Activated CD8-positive, alpha-beta T cell treated with anti-CD3 and anti-CD28 coated beads for 36 hours (primary cell): ENCODE measurements at regions of chr11 and their contacts with region 1.

Region 1: DNA sequence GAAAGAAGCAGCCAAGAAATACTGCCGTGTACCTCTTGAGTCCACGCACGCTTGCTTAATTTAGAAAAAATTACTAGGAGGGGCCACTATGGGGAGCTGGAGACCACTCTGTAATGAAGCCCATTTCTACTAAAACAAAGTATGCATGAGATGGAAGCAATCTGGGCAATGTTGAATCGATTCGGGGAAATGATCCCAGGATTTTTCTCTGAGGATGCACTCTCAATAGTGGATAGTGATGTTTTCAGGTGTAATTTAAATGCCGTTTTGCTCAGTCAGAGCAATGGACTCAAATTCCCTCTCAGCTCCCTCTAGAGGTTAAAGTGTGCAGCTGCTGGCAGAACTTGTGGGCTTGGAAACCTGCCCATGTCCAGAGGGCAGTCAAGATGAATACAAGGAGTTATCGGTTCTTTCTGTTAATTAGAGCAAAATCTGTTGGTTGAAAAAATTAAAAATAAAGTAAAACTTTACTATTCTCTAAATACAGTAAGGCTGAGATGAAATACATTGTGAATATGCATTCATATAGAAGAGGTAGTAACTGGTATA is 64.1 kb downstream of the ME3 start:
- DNase-seq: peak; percentile 54
- ATAC-seq: peak; percentile 88
- H3K4me3 Mint-ChIP-seq: no peak overlapping the region
- H3K27ac Mint-ChIP-seq: no peak overlapping the region
- H3K4me1 Mint-ChIP-seq: peaks cover 4% of the 10 kb centered on the region
- H3K27me3 Mint-ChIP-seq: peaks cover 4% of the 10 kb centered on the region
- CTCF ChIP-seq: peak; percentile 96

Region 2: DNA sequence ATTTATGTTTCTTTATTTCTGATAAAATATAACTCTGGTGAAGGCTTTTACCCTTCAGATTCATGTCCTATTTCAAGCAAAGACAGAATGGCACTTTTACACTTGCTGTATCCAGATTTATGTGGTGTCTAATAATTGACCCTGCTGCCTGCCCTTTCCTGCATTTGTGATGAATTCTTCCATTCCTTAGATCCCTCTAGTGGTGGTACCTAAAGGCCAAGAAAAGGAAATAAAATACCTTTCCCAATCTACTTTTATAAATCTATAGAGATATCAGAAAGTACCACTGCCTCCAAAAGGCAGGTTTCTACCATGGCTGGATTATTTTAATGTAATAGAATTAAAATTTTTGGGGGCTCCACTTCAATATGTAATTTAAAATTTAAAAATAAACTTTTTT is 199.5 kb before region 1 on chr11:
- CTCF ChIA-PET with region 1: no interaction called
- POLR2A ChIA-PET with region 1: no interaction called
- intact Hi-C with region 1: no loop called
- DNase-seq: no peak
- ATAC-seq: no peak
- H3K4me3 Mint-ChIP-seq: no peak overlapping the region
- H3K27ac Mint-ChIP-seq: no peak overlapping the region
- H3K4me1 Mint-ChIP-seq: no peaks in the 10 kb centered on the region
- H3K27me3 Mint-ChIP-seq: no peaks in the 10 kb centered on the region
- CTCF ChIP-seq: no peak

Region 3: DNA sequence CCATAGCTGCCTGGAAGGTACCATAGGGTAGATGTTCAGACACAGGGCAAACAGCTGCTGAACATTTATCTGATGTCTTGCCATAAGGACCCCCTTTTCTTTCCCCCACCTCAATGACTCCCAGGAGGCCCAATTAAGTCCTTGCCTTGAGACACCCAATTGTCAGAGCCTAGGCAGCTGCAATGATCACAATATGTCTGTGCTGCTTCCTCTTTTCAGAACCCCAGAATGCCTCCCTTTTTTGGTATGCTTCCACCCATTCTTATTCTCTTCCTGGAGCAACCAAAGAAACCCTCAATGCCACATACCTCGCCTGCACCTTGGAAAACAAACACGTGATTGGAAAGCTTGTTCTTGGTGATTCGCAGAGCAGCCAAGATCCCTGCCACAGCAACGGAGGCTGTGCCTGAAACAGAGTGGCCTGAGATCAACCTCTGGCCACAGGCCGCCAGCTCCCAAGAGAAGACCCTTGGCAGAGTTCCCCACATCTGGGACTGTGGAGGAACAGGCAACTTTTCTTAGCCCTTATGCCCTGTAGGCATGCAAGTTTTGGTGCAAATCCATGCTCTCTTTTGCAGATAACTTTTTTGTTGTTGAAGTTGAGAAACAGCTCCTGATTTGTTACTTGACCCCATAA is 158.2 kb before region 1 on chr11:
- CTCF ChIA-PET with region 1: interaction called, 28 read pairs
- POLR2A ChIA-PET with region 1: no interaction called
- intact Hi-C with region 1: loop called (anchors 5 kb)
- DNase-seq: no peak
- ATAC-seq: no peak
- H3K4me3 Mint-ChIP-seq: no peak overlapping the region
- H3K27ac Mint-ChIP-seq: no peak overlapping the region
- H3K4me1 Mint-ChIP-seq: peaks cover 23% of the 10 kb centered on the region
- H3K27me3 Mint-ChIP-seq: no peaks in the 10 kb centered on the region
- CTCF ChIP-seq: no peak

Region 4: GRCh38 chr11:86477495-86478155 is 130.7 kb before region 1 on chr11:
- CTCF ChIA-PET with region 1: no interaction called
- POLR2A ChIA-PET with region 1: no interaction called
- intact Hi-C with region 1: no loop called
- DNase-seq: no peak
- ATAC-seq: no peak
- H3K4me3 Mint-ChIP-seq: no peak overlapping the region
- H3K27ac Mint-ChIP-seq: no peak overlapping the region
- H3K4me1 Mint-ChIP-seq: no peaks in the 10 kb centered on the region
- H3K27me3 Mint-ChIP-seq: no peaks in the 10 kb centered on the region
- CTCF ChIP-seq: no peak

Region 5: DNA sequence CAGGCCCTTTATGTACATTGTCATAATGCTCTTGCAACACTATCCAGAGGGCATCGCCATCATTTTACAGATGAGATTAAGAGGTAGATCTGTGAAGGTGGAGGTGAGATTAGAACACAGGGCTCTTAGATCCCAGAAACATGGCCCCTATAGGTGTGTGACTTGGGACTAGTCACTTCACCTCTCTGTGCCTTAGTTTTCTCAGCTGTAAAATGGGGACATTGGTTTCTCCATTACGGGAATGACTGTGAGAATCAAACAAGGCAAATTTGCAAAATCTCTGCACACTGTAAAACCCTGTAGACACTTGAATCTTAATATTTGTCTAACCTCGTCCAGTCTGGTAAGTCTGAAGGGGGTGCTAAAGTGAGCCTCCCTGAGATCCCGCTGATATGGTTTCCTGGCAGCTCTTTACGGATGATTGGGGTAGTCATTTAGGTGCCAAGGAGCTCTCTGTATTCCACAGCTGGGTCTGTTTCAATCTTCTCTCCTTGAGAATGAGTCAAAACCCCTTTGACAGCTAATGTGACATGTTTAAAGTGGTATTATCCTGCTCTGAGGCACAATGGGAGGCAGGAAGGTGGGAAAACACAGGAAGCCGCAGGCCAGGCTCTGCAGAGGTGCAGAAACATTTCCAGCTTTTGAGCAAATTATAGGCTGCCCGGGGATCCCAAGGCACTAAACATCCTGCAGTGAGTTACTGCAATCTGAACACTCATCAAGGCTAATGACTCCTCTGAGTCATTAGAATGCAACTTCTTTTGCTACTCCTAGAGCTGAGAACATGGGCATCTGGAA is 92.8 kb before region 1 on chr11:
- CTCF ChIA-PET with region 1: interaction called, 11 read pairs
- POLR2A ChIA-PET with region 1: no interaction called
- intact Hi-C with region 1: no loop called
- DNase-seq: no peak
- ATAC-seq: no peak
- H3K4me3 Mint-ChIP-seq: no peak overlapping the region
- H3K27ac Mint-ChIP-seq: no peak overlapping the region
- H3K4me1 Mint-ChIP-seq: no peaks in the 10 kb centered on the region
- H3K27me3 Mint-ChIP-seq: peaks cover 2% of the 10 kb centered on the region
- CTCF ChIP-seq: no peak

Region 6: GRCh38 chr11:86577663-86578636 is 30.4 kb before region 1 on chr11:
- CTCF ChIA-PET with region 1: interaction called, 17 read pairs
- POLR2A ChIA-PET with region 1: no interaction called
- intact Hi-C with region 1: no loop called
- DNase-seq: no peak
- ATAC-seq: no peak
- H3K4me3 Mint-ChIP-seq: no peak overlapping the region
- H3K27ac Mint-ChIP-seq: no peak overlapping the region
- H3K4me1 Mint-ChIP-seq: no peaks in the 10 kb centered on the region
- H3K27me3 Mint-ChIP-seq: peaks cover 15% of the 10 kb centered on the region
- CTCF ChIP-seq: no peak

Region 7: DNA sequence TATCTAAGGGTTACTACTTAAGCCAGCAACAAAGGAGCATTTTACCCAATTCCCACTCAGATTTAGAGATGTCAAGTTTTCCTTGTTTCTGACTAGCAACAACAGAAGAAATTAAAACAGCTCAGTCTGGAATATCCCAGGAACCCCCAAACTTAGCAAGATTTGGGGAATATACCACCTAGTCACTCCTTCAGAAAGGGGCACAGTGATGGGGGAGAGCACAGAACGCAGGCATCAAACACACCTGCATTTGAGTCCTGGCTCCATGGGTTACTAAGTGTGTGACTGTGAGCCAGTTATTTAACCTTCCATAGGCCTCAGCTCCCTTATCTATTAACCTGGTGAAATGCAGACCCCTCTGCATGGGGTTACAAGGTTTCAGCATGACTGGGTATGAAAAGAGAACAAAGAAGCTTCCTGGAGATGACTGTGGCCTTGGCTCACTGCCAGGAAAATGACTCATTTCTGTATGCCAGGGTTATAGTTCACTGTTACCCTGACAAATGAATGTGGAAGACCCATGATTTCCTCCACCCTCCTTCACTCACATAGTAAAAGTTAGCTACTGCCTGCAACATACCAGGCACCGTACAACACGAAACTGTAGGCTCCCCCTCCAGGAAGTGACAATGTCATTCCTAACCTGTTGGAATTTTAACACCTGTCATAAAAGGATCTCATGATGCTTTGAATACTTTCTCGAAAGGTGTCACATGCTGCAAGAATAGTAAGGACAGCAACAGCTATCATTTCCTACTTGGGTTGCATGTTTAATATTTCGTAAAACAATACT is 15.5 kb before region 1 on chr11:
- CTCF ChIA-PET with region 1: interaction called, 39 read pairs
- POLR2A ChIA-PET with region 1: no interaction called
- intact Hi-C with region 1: no loop called
- DNase-seq: peak; percentile 97
- ATAC-seq: peak; percentile 97
- H3K4me3 Mint-ChIP-seq: no peak overlapping the region
- H3K27ac Mint-ChIP-seq: peak overlapping the region; percentile 67
- H3K4me1 Mint-ChIP-seq: peaks cover 28% of the 10 kb centered on the region
- H3K27me3 Mint-ChIP-seq: no peaks in the 10 kb centered on the region
- CTCF ChIP-seq: no peak

Region 8: GRCh38 chr11:86666193-86666592 is 57.9 kb after region 1 on chr11:
- CTCF ChIA-PET with region 1: interaction called, 11 read pairs
- POLR2A ChIA-PET with region 1: no interaction called
- intact Hi-C with region 1: no loop called
- DNase-seq: no peak
- ATAC-seq: no peak
- H3K4me3 Mint-ChIP-seq: no peak overlapping the region
- H3K27ac Mint-ChIP-seq: no peak overlapping the region
- H3K4me1 Mint-ChIP-seq: peaks cover 2% of the 10 kb centered on the region
- H3K27me3 Mint-ChIP-seq: peaks cover 32% of the 10 kb centered on the region
- CTCF ChIP-seq: no peak

Region 9: DNA sequence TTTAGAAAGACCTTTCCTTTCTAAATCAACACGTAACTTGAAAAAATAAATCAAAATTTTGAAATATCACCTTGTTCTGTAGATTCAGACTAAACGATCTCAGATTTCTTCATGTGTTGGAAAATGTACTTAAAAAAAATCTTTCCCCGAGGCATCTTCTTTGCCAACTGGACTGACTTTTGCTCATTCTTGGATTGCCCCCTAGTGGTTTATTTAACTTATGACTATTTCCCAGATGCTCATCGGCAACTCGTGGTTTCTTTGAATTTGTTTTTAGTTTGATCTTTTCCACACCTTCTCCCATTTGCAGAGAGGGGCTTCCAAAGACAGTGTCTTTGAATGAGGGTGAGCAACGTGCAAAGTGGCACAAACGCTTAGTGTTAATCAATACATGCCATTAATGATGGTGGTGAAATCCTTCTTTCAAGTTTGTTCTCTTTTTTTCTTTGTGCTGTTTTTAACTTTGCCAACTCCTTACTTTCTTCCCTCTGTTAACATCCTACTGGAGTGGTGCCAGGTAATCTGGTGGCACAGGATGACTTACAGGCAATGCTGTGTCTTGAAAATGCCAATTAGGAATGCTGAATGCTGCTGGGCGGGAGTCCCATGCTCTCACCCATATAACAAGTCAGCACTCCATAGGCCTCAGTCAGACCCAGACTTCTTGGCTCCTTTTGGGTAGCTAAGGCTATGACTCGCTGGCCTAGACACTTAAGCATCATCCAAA is 210.3 kb after region 1 on chr11:
- CTCF ChIA-PET with region 1: interaction called, 17 read pairs
- POLR2A ChIA-PET with region 1: interaction called, 4 read pairs
- intact Hi-C with region 1: no loop called
- DNase-seq: no peak
- ATAC-seq: peak; percentile 51
- H3K4me3 Mint-ChIP-seq: no peak overlapping the region
- H3K27ac Mint-ChIP-seq: no peak overlapping the region
- H3K4me1 Mint-ChIP-seq: no peaks in the 10 kb centered on the region
- H3K27me3 Mint-ChIP-seq: peaks cover 24% of the 10 kb centered on the region
- CTCF ChIP-seq: peak; percentile 91